CD14-positive monocyte (primary cell): ENCODE measurements at regions of chr22 and their contacts with region 1.

Region 1: GRCh38 chr22:23849009-23850006 is 8.4 kb upstream of the SLC2A11 start:
- DNase-seq: peak; percentile 69 to 76 (median 70)
- H3K4me3 ChIP-seq: no peak overlapping the region
- H3K4me3 Mint-ChIP-seq: peak overlapping the region in 1 of 2 donors; percentile 57
- H3K27ac ChIP-seq: no peak overlapping the region
- H3K27ac Mint-ChIP-seq: no peak overlapping the region
- H3K4me1 ChIP-seq: peaks cover 15 to 18% of the 10 kb centered on the region in 2 donors
- H3K4me1 Mint-ChIP-seq: peaks cover 17% of the 10 kb centered on the region
- H3K27me3 ChIP-seq: peaks cover 0 to 5% of the 10 kb centered on the region in 2 donors
- H3K27me3 Mint-ChIP-seq: peaks cover 8 to 11% (median 10%) of the 10 kb centered on the region in 3 donors
- CTCF ChIP-seq: peak; percentile 98

Region 2: GRCh38 chr22:23137905-23138561 is 711.3 kb before region 1 on chr22:
- intact Hi-C with region 1: no loop called
- DNase-seq: peak; percentile 48 to 63 (median 60)
- H3K4me3 ChIP-seq: no peak overlapping the region
- H3K4me3 Mint-ChIP-seq: peak overlapping the region in 1 of 2 donors; percentile 4
- H3K27ac ChIP-seq: peak overlapping the region; percentile 32 to 54
- H3K27ac Mint-ChIP-seq: peak overlapping the region; percentile 76 to 90 (median 86)
- H3K4me1 ChIP-seq: peaks cover 30 to 38% of the 10 kb centered on the region in 2 donors
- H3K4me1 Mint-ChIP-seq: peaks cover 29% of the 10 kb centered on the region
- H3K27me3 ChIP-seq: no peaks in the 10 kb centered on the region
- H3K27me3 Mint-ChIP-seq: peaks cover 0 to 3% (median 2%) of the 10 kb centered on the region in 3 donors
- CTCF ChIP-seq: no peak

Region 3: DNA sequence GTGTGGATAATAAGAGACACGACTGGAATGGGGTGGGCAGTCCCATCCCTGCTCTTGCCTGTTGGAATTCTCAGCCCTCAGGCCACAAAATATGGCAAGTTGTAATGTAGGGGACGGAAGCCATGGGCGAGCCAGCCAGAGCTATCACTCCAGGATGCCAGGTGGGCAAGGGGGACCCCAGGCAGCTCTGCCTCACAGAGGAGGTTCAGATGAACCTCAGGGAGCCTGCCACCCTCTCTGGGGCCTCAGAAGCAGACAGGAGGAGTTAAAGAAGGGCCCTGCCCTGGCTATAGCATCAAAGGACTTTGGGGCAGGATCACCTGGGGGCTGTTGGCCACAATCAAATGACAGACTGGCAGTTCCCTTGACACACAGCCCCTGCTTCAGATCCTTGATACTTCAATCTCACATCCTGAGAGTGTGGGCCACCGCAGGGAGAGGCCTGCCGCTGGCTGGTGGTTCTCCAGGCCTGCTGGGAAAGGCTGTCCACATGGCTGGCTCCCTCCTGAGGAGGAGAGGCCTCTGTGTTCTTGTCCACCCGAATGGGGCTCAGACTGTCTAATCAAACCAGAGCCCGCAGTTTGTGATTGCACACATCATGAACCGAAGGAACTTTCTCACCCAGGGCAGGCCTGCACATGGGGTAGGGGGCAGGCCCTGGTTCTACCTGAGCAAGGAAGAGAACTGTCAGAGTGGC is 300.7 kb before region 1 on chr22:
- intact Hi-C with region 1: loop called in 1 of 2 experiments (anchors 5 kb)
- DNase-seq: no peak
- H3K4me3 ChIP-seq: no peak overlapping the region
- H3K4me3 Mint-ChIP-seq: no peak overlapping the region
- H3K27ac ChIP-seq: no peak overlapping the region
- H3K27ac Mint-ChIP-seq: no peak overlapping the region
- H3K4me1 ChIP-seq: no peaks in the 10 kb centered on the region
- H3K4me1 Mint-ChIP-seq: no peaks in the 10 kb centered on the region
- H3K27me3 ChIP-seq: no peaks in the 10 kb centered on the region
- H3K27me3 Mint-ChIP-seq: peaks cover 0 to 3% (median 3%) of the 10 kb centered on the region in 3 donors
- CTCF ChIP-seq: no peak

Region 4: DNA sequence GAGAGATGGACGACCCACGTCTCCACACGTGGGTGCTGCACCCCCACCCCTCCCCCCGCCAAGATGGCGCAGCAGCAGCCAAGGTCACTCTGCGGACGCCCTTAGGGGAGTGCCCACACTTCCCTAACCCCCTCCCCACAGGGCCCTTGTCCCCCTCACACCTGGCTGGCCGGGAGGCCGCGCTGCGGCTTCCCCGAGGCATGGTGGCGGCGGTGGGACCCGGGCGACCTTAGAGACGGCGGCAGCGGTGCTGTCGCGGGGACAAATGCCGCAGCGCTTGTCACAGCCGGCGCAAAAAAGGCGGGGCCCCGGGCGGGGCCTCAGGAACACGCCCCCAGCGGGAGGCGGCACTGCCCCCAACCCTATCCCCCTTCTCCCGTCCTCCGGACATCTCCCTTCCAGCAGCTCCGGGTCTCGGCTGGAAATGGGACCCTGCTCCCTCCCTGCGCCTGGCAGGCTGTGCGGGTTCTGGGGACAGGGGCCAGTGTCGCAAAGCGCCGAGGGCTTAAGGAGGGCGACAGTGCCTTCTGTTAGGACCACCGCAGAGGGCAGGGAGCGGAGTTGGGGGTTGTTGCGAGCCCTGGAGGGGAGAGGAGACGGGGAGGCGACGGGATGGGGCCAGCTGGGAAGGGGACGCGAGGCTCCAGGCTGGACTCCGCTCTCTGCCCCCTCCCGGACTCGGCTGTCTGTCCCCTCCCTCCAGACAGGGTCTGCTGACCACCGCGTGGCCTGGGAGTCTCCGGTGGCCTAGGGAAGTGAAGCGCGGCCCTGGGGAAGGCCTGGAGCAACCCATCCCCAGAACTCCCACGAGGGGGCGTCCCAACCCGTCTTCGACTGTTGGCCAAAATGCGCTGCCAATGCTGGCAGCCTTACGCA is 81.4 kb before region 1 on chr22 and contains the start of gene CHCHD10:
- intact Hi-C with region 1: loop called (anchors 2 kb)
- DNase-seq: peak; percentile 76 to 83 (median 77)
- H3K4me3 ChIP-seq: peak within 1 kb of the TSS; percentile 48 to 92 (median 71)
- H3K4me3 Mint-ChIP-seq: peak within 1 kb of the TSS; percentile 85 to 90
- H3K27ac ChIP-seq: peak within 1 kb of the TSS; percentile 45 to 85
- H3K27ac Mint-ChIP-seq: peak within 1 kb of the TSS in 6 of 7 donors; percentile 78 to 94 (median 87)
- H3K4me1 ChIP-seq: peaks cover 37 to 53% of the 10 kb centered on the region in 2 donors
- H3K4me1 Mint-ChIP-seq: peaks cover 40% of the 10 kb centered on the region
- H3K27me3 ChIP-seq: peaks cover 4 to 10% of the 10 kb centered on the region in 2 donors
- H3K27me3 Mint-ChIP-seq: peaks cover 11 to 15% (median 12%) of the 10 kb centered on the region in 3 donors
- CTCF ChIP-seq: peak; percentile 91
- polyA plus RNA-seq, gene CHCHD10: 15.3 to 46.7 (median 26.8) TPM